Transverse colon (tissue), 4 donors: ENCODE measurements at regions of chr2 and their contacts with region 1.

Region 1: GRCh38 chr2:150578481-150578880 is 91.0 kb upstream of the RND3 start:
- DNase-seq: no peak
- H3K4me3 ChIP-seq: no peak overlapping the region
- H3K27ac ChIP-seq: no peak overlapping the region
- H3K4me1 ChIP-seq: no peaks in the 10 kb centered on the region
- H3K27me3 ChIP-seq: no peaks in the 10 kb centered on the region
- CTCF ChIP-seq: no peak
- EP300 ChIP-seq: no peak
- POLR2A ChIP-seq: no peak

Region 2: GRCh38 chr2:149816756-149817551 is 761.5 kb before region 1 on chr2:
- in situ Hi-C with region 1: no loop called
- intact Hi-C with region 1: no loop called
- DNase-seq: no peak
- H3K4me3 ChIP-seq: no peak overlapping the region
- H3K27ac ChIP-seq: no peak overlapping the region
- H3K4me1 ChIP-seq: no peaks in the 10 kb centered on the region
- H3K27me3 ChIP-seq: no peaks in the 10 kb centered on the region
- CTCF ChIP-seq: no peak
- EP300 ChIP-seq: no peak
- POLR2A ChIP-seq: no peak

Region 3: GRCh38 chr2:150531591-150531990 is 46.9 kb before region 1 on chr2:
- in situ Hi-C with region 1: no loop called
- intact Hi-C with region 1: loop called (anchors 2 kb)
- DNase-seq: no peak
- H3K4me3 ChIP-seq: no peak overlapping the region
- H3K27ac ChIP-seq: no peak overlapping the region
- H3K4me1 ChIP-seq: peaks cover 0 to 5% (median 0%) of the 10 kb centered on the region in 4 donors
- H3K27me3 ChIP-seq: no peaks in the 10 kb centered on the region
- CTCF ChIP-seq: no peak
- EP300 ChIP-seq: no peak
- POLR2A ChIP-seq: no peak

Region 4: DNA sequence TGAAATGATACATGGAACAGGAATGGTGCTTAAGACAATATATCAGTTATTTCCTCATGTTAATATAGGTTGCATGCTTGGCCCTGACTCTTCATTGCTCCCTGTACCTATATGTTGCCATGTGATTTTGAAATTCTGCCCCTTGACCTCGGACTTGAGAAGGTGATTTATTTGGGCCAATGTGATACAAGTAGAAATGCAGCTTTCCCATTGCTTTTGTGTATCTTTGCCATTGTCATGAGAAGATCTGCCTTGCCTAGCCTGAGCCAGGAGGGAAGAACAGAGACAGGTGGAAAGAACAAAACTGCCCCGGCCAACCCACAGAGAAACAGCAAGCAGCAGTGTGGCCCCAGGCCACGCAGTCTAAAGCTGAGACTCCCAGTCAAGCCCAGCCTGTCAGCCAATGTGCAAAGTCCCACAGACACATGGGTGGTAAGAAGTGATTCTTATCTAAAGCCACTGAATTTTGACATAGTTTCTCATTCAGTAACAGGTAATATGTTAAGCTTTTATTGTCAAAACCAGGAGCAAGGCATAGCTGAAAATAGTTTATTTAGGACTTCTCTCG is 154.7 kb after region 1 on chr2:
- in situ Hi-C with region 1: no loop called
- intact Hi-C with region 1: no loop called
- DNase-seq: no peak
- H3K4me3 ChIP-seq: no peak overlapping the region
- H3K27ac ChIP-seq: no peak overlapping the region
- H3K4me1 ChIP-seq: no peaks in the 10 kb centered on the region
- H3K27me3 ChIP-seq: no peaks in the 10 kb centered on the region
- CTCF ChIP-seq: no peak
- EP300 ChIP-seq: no peak
- POLR2A ChIP-seq: no peak